Vagina (tissue), 2 donors: ENCODE measurements at regions of chr4 and their contacts with region 1.

Region 1: GRCh38 chr4:18578307-18578706 is 556.8 kb upstream of the LCORL start:
- DNase-seq: no peak
- H3K4me3 ChIP-seq: no peak overlapping the region
- H3K27ac ChIP-seq: no peak overlapping the region
- H3K4me1 ChIP-seq: no peaks in the 10 kb centered on the region
- H3K27me3 ChIP-seq: no peaks in the 10 kb centered on the region
- CTCF ChIP-seq: no peak
- POLR2A ChIP-seq: no peak

Region 2: DNA sequence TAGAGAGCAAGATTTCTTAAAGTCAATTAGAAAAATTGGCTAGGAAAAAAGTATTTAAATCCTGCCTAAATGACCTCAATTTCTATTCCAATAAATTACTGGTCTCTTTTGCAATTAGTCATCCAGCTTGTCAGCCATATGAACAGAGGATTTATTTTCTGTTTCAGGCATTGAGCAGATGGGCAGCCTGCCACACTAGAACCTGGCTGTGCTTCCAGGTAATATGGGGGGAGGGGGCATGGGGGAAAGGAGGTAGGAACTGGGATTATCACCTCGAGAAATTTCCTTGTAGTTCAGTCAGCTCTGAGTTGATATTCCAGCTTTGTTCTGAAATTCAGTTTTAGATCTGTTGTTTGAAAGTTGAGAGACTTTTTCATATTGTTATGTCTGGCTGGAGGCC is 350.4 kb before region 1 on chr4:
- intact Hi-C with region 1: loop called (anchors 5 kb)
- DNase-seq: no peak
- H3K4me3 ChIP-seq: no peak overlapping the region
- H3K27ac ChIP-seq: no peak overlapping the region
- H3K4me1 ChIP-seq: no peaks in the 10 kb centered on the region
- H3K27me3 ChIP-seq: no peaks in the 10 kb centered on the region
- CTCF ChIP-seq: no peak
- POLR2A ChIP-seq: no peak